ENCODE measurements at regions of chr12 and their contacts with region 1.

Region 1: DNA sequence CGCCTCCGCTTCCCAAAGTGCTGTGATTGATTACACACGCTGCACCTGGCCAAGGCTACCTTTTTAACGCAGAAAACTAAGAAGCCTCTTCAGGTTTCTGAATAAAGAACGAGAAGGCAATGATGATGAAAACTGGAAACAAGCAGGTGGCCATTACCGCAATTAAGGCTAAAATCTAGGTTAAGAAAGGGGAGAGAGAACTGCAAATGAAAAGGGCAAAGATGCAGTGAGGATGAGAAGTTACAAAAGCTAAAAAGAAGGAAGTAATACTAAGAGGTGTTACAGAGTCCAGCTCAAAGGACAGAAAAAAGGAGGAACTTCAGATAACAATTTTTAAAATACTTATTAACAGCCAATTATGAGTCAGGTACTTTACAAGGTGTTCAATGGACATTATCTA is 79.7 kb downstream of the DUSP16 start:
- DNase-seq: no peak
- H3K4me3 Mint-ChIP-seq: peak overlapping the region; percentile 66
- H3K27ac Mint-ChIP-seq: peak overlapping the region; percentile 92
- H3K4me1 Mint-ChIP-seq: peaks cover 65% of the 10 kb centered on the region
- H3K27me3 Mint-ChIP-seq: no peaks in the 10 kb centered on the region

Region 2: DNA sequence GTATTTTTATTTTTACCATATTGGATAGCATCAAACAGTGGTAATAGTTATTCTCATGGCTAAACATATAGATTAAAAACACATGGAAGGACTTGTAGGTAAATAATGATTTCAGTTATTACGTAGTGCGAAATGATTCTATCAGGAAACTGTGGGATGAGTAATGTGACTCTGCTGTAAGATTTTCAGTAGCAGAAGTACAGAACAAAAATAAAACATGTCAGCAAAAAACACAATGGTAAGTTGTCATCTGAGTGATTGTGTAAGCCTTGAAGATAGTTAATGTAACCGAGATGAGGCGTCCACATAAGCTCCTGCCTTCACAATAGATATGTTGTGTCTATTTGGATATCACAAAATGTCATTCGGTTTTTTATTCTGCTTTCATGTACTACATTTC is 26.3 kb before region 1 on chr12:
- CTCF ChIA-PET with region 1: interaction called, 3 read pairs
- intact Hi-C with region 1: loop called (anchors 1 kb)
- DNase-seq: no peak
- H3K4me3 Mint-ChIP-seq: peak overlapping the region; percentile 17
- H3K27ac Mint-ChIP-seq: peak overlapping the region; percentile 76
- H3K4me1 Mint-ChIP-seq: peaks cover 51% of the 10 kb centered on the region
- H3K27me3 Mint-ChIP-seq: no peaks in the 10 kb centered on the region

Region 3: GRCh38 chr12:12654691-12655460 is 171.9 kb after region 1 on chr12:
- CTCF ChIA-PET with region 1: no interaction called
- intact Hi-C with region 1: loop called (anchors 5 kb)
- DNase-seq: no peak
- H3K4me3 Mint-ChIP-seq: no peak overlapping the region
- H3K27ac Mint-ChIP-seq: no peak overlapping the region
- H3K4me1 Mint-ChIP-seq: peaks cover 7% of the 10 kb centered on the region
- H3K27me3 Mint-ChIP-seq: no peaks in the 10 kb centered on the region

Region 4: DNA sequence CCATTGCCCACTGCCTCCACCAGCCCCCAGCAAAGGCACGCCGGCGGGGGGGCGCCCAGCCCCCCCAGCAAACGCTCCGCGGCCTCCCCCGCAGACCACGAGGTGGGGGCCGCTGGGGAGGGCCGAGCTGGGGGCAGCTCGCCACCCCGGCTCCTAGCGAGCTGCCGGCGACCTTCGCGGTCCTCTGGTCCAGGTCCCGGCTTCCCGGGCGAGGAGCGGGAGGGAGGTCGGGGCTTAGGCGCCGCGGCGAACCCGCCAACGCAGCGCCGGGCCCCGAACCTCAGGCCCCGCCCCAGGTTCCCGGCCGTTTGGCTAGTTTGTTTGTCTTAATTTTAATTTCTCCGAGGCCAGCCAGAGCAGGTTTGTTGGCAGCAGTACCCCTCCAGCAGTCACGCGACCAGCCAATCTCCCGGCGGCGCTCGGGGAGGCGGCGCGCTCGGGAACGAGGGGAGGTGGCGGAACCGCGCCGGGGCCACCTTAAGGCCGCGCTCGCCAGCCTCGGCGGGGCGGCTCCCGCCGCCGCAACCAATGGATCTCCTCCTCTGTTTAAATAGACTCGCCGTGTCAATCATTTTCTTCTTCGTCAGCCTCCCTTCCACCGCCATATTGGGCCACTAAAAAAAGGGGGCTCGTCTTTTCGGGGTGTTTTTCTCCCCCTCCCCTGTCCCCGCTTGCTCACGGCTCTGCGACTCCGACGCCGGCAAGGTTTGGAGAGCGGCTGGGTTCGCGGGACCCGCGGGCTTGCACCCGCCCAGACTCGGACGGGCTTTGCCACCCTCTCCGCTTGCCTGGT is 234.0 kb after region 1 on chr12 and contains the start of gene CDKN1B:
- CTCF ChIA-PET with region 1: interaction called, 3 read pairs
- intact Hi-C with region 1: loop called (anchors 5 kb)
- DNase-seq: peak; percentile 90
- H3K4me3 Mint-ChIP-seq: peak within 1 kb of the TSS; percentile 98
- H3K27ac Mint-ChIP-seq: peak within 1 kb of the TSS; percentile 98
- H3K4me1 Mint-ChIP-seq: peaks cover 55% of the 10 kb centered on the region
- H3K27me3 Mint-ChIP-seq: no peaks in the 10 kb centered on the region
- total RNA-seq, gene CDKN1B: 35.9 to 39.1 TPM

Measured in activated naive CD4-positive, alpha-beta T cell treated with anti-CD3 and anti-CD28 coated beads for 36 hours (primary cell).